GM12878 (cell line): ENCODE measurements at regions of chr10 and their contacts with region 1.

Region 1: DNA sequence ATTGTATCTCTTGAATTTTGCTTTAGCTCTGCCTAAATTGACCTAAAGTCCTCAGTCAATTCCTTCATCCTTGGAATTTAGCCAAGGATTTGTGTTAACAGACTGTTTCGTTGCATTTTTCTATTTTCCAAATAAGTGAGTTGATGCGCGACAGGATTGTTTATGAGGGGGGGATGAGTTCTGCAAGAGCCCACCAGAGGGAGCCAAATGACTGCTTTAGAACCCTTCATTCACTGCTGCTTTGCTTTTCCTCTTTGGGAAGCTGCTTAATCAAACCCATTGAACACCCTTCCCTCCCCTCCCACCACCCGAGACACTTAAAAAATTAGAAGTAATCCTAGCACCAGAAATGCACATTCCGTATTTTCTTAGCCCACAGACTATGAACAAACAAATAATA is 33.7 kb upstream of the PTF1A start:
- DNase-seq: no peak
- ATAC-seq: peak; percentile 78
- H3K4me3 ChIP-seq: no peak overlapping the region
- H3K27ac ChIP-seq: no peak overlapping the region
- H3K4me1 ChIP-seq: peaks cover 6% of the 10 kb centered on the region; the same call in 1 of the 2 replicates
- H3K27me3 ChIP-seq: peaks cover 0 to 4% of the 10 kb centered on the region in 2 experiments; a peak in 1 of 4 replicates
- CTCF ChIP-seq: peak; percentile 84 to 87 (median 86); a peak in 5 of 6 replicates
- EP300 ChIP-seq: no peak; a peak in 1 of 4 replicates
- POLR2A ChIP-seq: no peak
- RAD21 ChIP-seq: peak; percentile 76

Region 2: GRCh38 chr10:21989453-21990154 is 1168.8 kb before region 1 on chr10:
- CTCF ChIA-PET with region 1: no interaction called
- POLR2A ChIA-PET with region 1: no interaction called
- RAD21 ChIA-PET with region 1: no interaction called
- SMC1A ChIA-PET with region 1: no interaction called
- in situ Hi-C with region 1: no loop called
- intact Hi-C with region 1: loop called (anchors 5 kb)
- DNase-seq: no peak
- ATAC-seq: peak; percentile 98
- H3K4me3 ChIP-seq: no peak overlapping the region
- H3K27ac ChIP-seq: no peak overlapping the region
- H3K4me1 ChIP-seq: no peaks in the 10 kb centered on the region
- H3K27me3 ChIP-seq: no peaks in the 10 kb centered on the region
- CTCF ChIP-seq: peak; percentile 65 to 68 (median 65)
- EP300 ChIP-seq: no peak
- POLR2A ChIP-seq: no peak
- RAD21 ChIP-seq: peak; percentile 77

Region 3: DNA sequence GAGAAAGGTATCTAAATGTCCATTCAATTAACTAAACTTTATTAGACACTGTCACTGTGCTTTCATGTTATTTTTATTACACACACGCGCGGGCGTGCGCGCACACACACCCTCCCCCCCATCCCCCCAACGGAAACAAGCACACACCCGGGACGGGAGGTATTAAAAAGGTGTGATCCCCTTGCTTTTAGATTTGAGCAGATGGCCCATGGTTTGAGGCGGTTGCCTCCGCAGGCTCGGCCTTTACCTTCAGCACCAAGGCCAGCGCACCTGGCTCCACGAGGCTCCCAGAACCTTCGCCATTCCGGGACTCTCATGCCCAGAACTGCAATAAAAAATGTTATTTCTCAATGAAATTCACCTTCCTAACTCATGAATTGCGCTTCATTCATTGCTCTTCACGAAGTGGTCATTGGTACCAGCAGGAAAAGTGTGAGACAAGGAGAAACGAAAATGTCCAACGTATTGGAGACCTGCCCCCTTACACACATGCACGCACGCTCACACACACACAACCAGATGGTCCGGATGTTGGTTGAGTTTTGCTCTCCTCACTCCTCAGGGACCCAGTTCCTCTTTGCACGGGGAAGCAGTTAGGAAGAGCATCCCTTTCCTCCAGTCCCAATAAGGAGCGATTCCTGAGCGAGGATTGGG is 13.0 kb after region 1 on chr10:
- CTCF ChIA-PET with region 1: interaction called, 19 read pairs
- POLR2A ChIA-PET with region 1: no interaction called
- RAD21 ChIA-PET with region 1: no interaction called
- SMC1A ChIA-PET with region 1: interaction called, 8 read pairs
- in situ Hi-C with region 1: no loop called
- intact Hi-C with region 1: no loop called
- DNase-seq: no peak
- ATAC-seq: no peak
- H3K4me3 ChIP-seq: no peak overlapping the region
- H3K27ac ChIP-seq: no peak overlapping the region
- H3K4me1 ChIP-seq: no peaks in the 10 kb centered on the region
- H3K27me3 ChIP-seq: no peaks in the 10 kb centered on the region; a peak in 3 of 4 replicates
- CTCF ChIP-seq: no peak
- EP300 ChIP-seq: no peak
- POLR2A ChIP-seq: no peak
- RAD21 ChIP-seq: no peak

Region 4: GRCh38 chr10:23314835-23315239 is 156.5 kb after region 1 on chr10:
- CTCF ChIA-PET with region 1: interaction called, 6 read pairs
- POLR2A ChIA-PET with region 1: no interaction called
- RAD21 ChIA-PET with region 1: interaction called, 4 read pairs
- SMC1A ChIA-PET with region 1: interaction called, 11 read pairs
- in situ Hi-C with region 1: no loop called
- intact Hi-C with region 1: no loop called
- DNase-seq: peak; percentile 28
- ATAC-seq: peak; percentile 61
- H3K4me3 ChIP-seq: no peak overlapping the region
- H3K27ac ChIP-seq: no peak overlapping the region
- H3K4me1 ChIP-seq: no peaks in the 10 kb centered on the region
- H3K27me3 ChIP-seq: no peaks in the 10 kb centered on the region
- CTCF ChIP-seq: peak; percentile 55 to 70 (median 62)
- EP300 ChIP-seq: no peak
- POLR2A ChIP-seq: no peak
- RAD21 ChIP-seq: peak; percentile 80

Region 5: DNA sequence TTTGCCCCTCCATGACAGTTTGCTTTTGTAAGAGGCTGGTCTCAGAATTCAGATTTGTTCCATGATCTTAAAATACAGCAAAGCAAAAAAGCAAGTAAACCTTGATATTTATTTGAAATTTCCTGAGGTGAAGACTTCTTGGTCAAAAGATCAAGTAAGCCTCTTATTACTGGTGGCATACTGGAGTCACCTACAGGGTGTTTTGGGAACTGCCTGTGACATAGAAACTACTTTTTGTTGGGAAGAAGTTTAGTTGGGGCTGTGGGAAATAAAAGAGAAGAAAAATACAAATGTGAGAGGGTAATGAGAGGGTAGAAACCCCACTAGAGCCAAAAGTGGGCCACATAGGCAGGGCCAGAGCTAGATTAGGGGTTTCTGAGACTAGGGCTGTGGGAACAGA is 498.4 kb after region 1 on chr10:
- CTCF ChIA-PET with region 1: no interaction called
- POLR2A ChIA-PET with region 1: no interaction called
- RAD21 ChIA-PET with region 1: no interaction called
- SMC1A ChIA-PET with region 1: no interaction called
- in situ Hi-C with region 1: no loop called
- intact Hi-C with region 1: loop called (anchors 5 kb)
- DNase-seq: no peak
- ATAC-seq: no peak
- H3K4me3 ChIP-seq: no peak overlapping the region
- H3K27ac ChIP-seq: no peak overlapping the region
- H3K4me1 ChIP-seq: no peaks in the 10 kb centered on the region
- H3K27me3 ChIP-seq: no peaks in the 10 kb centered on the region
- CTCF ChIP-seq: peak in 2 of 3 experiments; percentile 16 to 33; a peak in 2 of 6 replicates
- EP300 ChIP-seq: no peak
- POLR2A ChIP-seq: no peak
- RAD21 ChIP-seq: peak; percentile 46

Region 6: DNA sequence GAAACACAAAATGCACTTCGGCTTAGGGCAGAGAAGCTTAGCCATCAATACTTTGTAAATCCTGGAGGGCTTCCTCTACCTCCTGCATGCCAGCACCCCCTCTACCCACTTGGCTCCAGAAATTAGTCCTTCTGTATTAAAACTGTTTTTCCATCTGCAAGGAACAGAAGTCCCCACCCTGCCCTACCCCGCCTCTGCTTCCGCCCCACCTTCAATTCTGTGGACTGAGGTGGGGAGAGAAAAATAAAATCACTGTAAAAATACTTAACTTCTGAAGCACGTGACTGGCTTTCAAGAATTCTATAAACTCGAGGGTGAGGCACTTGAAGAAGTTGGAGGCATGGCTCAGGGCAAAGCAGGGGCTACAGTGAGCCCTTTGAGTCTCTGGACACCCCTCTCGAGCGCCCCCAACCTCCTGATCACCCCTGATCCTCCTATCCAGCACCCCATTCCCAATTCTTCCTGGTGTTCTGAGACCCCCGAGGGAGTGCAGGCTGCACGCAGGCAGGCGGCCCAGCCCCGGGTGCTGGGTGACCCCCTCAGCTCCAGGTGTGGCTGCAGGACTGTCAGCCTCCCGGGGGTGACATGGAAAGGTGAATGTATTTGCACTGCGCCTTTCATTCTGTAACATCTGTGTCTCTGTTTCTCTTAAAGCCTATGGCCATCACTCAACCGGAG is 1043.3 kb after region 1 on chr10:
- CTCF ChIA-PET with region 1: no interaction called
- POLR2A ChIA-PET with region 1: no interaction called
- RAD21 ChIA-PET with region 1: no interaction called
- SMC1A ChIA-PET with region 1: no interaction called
- in situ Hi-C with region 1: no loop called
- intact Hi-C with region 1: loop called (anchors 5 kb)
- DNase-seq: no peak
- ATAC-seq: no peak
- H3K4me3 ChIP-seq: no peak overlapping the region
- H3K27ac ChIP-seq: no peak overlapping the region
- H3K4me1 ChIP-seq: peaks cover 3% of the 10 kb centered on the region
- H3K27me3 ChIP-seq: no peaks in the 10 kb centered on the region
- CTCF ChIP-seq: no peak
- EP300 ChIP-seq: no peak
- POLR2A ChIP-seq: no peak
- RAD21 ChIP-seq: no peak